ENCODE measurements at regions of chr22 and their contacts with region 1.

Region 1: DNA sequence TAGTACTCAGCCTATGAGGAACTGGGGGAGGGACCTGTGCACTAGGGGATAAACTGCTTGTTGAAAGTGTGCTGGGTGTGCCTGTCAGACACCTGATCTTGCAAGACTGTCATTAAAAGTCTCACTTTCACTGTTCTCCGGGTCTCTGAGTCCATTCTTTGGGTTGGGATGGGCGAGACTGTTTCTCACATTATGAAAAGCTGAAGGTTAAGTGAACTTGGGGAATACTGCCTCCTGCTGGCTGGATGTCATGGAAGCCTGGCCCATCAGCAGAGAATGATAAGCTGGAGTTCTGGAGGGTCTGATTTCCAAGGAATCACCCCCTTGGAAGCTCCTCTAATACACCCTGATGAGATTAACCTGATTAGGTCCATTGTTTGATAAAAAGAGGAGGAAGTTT is 9.0 kb upstream of the VPREB1 start:
- DNase-seq: peak in 1 of 2 experiments; percentile 68
- H3K4me3 ChIP-seq: no peak overlapping the region
- H3K27ac ChIP-seq: no peak overlapping the region
- H3K4me1 ChIP-seq: no peaks in the 10 kb centered on the region
- H3K27me3 ChIP-seq: peaks cover 77 to 99% (median 97%) of the 10 kb centered on the region in 4 experiments
- CTCF ChIP-seq: peak; percentile 60 to 75 (median 71)
- EP300 ChIP-seq: no peak
- POLR2A ChIP-seq: no peak
- RAD21 ChIP-seq: peak; percentile 56 to 64

Region 2: DNA sequence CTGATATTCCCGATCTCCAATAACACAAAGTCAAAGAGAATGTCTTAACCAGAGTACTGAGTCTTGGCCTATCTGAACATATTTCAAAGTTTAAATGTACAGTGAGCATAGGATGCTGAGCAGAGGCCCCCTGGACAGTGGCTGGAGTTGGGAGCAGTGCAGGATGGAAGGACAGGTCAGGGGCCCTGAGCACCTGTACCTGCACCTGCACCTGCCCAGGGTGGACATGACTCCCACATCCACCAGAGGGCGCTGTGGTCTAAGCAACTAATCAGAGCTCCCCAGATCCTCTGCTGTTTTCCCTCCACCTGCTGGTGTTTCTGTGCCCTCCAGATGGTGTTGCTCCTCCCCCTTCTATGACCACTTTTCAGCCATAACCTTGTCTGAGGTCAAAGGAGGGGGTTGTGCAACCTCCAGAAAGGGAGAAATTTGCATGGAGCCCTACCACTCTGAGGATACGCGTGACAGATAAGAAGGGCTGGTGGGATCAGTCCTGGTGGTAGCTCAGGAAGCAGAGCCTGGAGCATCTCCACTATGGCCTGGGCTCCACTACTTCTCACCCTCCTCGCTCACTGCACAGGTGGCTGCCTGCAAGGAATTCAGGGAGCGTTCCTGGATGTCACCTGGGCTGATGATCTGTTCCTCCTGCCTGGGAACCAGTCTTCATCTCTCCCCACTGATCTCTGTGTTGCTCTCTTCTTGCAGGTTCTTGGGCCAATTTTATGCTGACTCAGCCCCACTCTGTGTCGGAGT is 40.1 kb before region 1 on chr22:
- CTCF ChIA-PET with region 1: interaction called, 29 read pairs
- POLR2A ChIA-PET with region 1: no interaction called
- DNase-seq: peak; percentile 64 to 95
- H3K4me3 ChIP-seq: no peak overlapping the region
- H3K27ac ChIP-seq: no peak overlapping the region
- H3K4me1 ChIP-seq: no peaks in the 10 kb centered on the region
- H3K27me3 ChIP-seq: peaks cover 58 to 66% (median 64%) of the 10 kb centered on the region in 4 experiments
- CTCF ChIP-seq: peak; percentile 94 to 98 (median 98)
- EP300 ChIP-seq: no peak
- POLR2A ChIP-seq: no peak
- RAD21 ChIP-seq: peak; percentile 86 to 87

Region 3: DNA sequence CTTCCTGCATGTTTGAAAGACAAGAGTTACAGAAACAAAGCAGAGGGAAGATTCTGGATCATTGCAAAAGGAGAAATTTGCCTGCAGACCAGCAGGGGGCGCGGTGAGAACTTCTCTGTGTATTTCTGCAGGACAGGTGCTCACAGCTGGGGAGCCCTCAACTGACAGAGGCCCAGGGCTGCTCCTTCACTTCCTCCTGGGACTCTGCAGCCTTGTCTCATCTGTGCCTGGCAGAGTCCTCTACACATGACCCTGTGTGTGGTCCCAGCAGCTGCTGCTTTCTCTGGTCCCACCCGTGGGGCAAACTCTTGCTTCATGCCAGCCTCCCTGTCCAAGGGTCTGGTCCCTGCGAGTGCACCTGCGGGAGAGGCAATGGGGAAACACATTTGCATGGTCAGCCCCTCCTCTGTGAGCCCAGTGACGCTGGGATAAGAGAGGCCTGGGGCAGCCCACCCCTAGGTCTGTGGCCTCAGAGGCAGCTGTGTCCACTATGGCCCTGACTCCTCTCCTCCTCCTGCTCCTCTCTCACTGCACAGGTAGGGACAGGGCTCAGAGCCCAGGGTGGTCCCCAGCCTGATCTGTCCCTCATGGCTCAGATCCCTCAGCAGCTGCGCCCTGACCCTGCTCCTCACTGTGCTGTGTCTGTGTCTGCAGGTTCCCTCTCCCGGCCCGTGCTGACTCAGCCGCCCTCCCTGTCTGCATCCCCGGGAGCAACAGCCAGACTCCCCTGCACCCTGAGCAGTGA is 34.2 kb before region 1 on chr22:
- CTCF ChIA-PET with region 1: interaction called, 29 read pairs
- POLR2A ChIA-PET with region 1: no interaction called
- DNase-seq: peak; percentile 19 to 87
- H3K4me3 ChIP-seq: no peak overlapping the region
- H3K27ac ChIP-seq: no peak overlapping the region
- H3K4me1 ChIP-seq: no peaks in the 10 kb centered on the region
- H3K27me3 ChIP-seq: peaks cover 88 to 99% (median 97%) of the 10 kb centered on the region in 4 experiments
- CTCF ChIP-seq: peak; percentile 67 to 86 (median 72)
- EP300 ChIP-seq: no peak
- POLR2A ChIP-seq: no peak
- RAD21 ChIP-seq: peak; percentile 30 to 40; a peak in 2 of 4 replicates

Region 4: DNA sequence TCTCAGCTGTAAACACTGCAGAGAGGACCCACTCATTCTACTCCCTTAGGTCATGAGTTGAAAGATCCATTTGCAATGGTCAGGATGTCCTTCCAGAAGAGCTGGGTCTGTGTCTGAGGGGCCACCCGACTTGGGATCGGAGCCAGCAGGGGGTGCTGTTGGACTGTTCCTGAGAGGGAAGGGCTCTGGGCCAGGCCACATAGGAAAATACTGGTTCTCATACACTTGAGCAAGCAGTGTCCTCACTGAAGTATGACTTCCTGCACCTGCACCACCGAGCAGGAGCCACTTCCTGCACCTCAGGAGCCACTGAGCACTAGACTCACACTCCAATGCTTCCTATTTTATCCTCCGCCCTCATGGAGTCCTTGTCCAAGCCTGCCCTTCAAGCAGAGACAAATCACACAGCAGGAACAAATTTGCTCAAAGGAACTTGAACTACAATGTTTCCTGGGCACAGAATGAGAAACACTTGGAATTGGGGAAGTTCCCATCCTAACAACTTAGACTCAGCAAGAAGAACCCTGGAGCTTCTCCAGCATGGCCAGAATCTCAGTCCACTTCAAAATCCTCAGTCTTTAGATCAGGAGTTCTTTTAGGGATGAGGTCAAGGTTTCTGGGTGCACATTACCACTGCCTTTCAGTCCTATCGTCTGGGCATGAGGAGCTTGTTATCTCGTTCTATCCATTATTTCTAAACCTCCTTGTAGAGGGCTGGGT is 27.6 kb before region 1 on chr22:
- CTCF ChIA-PET with region 1: interaction called, 29 read pairs
- POLR2A ChIA-PET with region 1: no interaction called
- DNase-seq: peak; percentile 36 to 92
- H3K4me3 ChIP-seq: no peak overlapping the region
- H3K27ac ChIP-seq: no peak overlapping the region
- H3K4me1 ChIP-seq: no peaks in the 10 kb centered on the region
- H3K27me3 ChIP-seq: peaks cover 78 to 99% (median 89%) of the 10 kb centered on the region in 4 experiments
- CTCF ChIP-seq: peak; percentile 74 to 86 (median 81)
- EP300 ChIP-seq: no peak
- POLR2A ChIP-seq: no peak
- RAD21 ChIP-seq: peak; percentile 85 to 86

Region 5: DNA sequence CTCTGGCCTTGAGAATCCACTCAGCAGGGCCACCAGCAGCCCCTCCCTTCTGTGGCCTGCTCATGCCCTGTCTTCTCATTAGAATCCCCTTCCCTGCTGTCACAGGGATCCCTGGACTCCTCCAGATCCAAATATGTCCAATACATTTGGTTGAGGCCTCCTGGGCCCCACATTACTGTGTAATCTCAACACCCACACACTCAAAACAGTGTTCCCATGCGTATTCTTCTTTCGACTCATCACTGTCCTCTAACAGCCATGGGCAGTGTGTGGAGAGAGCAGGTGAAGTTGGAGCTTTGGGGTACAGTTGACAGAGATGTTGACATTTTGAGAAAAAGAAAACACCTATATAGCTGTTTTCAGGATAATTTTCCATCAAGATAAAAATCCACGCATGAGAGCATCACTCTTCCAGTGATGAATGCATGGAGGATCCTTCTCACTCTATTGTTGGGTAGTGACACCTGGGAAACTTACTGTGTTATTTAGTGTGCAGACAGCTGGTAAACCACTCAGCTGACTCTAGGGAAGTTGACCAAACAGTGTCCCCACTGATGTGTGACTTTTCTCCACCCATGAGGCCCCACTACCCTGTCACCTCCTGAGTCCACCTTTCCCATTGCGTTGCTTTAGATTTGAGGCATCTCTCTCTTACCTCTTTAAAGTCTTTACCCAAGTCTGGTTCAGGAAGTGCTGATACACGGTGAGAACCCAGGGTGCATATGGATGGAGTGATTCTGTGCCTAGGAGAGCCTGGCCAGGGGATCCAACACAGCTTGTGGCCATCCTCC is 19.7 kb before region 1 on chr22:
- CTCF ChIA-PET with region 1: interaction called, 21 read pairs
- POLR2A ChIA-PET with region 1: no interaction called
- DNase-seq: no peak
- H3K4me3 ChIP-seq: no peak overlapping the region
- H3K27ac ChIP-seq: no peak overlapping the region
- H3K4me1 ChIP-seq: no peaks in the 10 kb centered on the region
- H3K27me3 ChIP-seq: peaks cover 79 to 96% (median 89%) of the 10 kb centered on the region in 4 experiments
- CTCF ChIP-seq: no peak
- EP300 ChIP-seq: no peak
- POLR2A ChIP-seq: no peak
- RAD21 ChIP-seq: no peak

Region 6: GRCh38 chr22:22248878-22249277 is 13.3 kb after region 1 on chr22:
- CTCF ChIA-PET with region 1: interaction called, 31 read pairs
- POLR2A ChIA-PET with region 1: no interaction called
- DNase-seq: no peak
- H3K4me3 ChIP-seq: no peak overlapping the region
- H3K27ac ChIP-seq: no peak overlapping the region
- H3K4me1 ChIP-seq: no peaks in the 10 kb centered on the region
- H3K27me3 ChIP-seq: peaks cover 64 to 72% (median 71%) of the 10 kb centered on the region in 4 experiments
- CTCF ChIP-seq: no peak
- EP300 ChIP-seq: no peak
- POLR2A ChIP-seq: no peak
- RAD21 ChIP-seq: no peak